Vagina (tissue), 2 donors: ENCODE measurements at regions of chr15 and their contacts with region 1.

Region 1: DNA sequence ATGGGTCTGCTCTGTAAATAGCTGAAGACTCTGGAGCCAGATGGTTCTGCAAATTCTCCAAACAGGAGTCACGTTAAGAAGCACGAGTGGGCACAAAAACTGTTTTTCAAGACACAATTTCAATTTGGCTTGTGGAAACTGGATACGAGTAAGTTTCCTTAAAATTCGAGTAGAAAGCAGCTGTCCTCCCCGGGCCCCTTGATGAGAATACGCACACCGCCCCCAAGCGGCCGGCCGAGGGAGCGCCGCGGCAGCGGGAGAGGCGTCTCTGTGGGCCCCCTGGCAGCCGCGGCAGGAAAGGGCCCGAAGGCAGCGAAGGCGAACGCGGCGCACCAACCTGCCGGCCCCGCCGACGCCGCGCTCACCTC is 778 bp upstream of the THBS1 start:
- DNase-seq: no peak
- H3K4me3 ChIP-seq: peak overlapping the region; percentile 53 to 80
- H3K27ac ChIP-seq: peak overlapping the region; percentile 87
- H3K4me1 ChIP-seq: peaks cover 58% of the 10 kb centered on the region
- H3K27me3 ChIP-seq: no peaks in the 10 kb centered on the region
- CTCF ChIP-seq: peak; percentile 83 to 99 (median 90)
- POLR2A ChIP-seq: no peak

Region 2: GRCh38 chr15:38817427-38818156 is 762.5 kb before region 1 on chr15:
- intact Hi-C with region 1: loop called (anchors 10 kb)
- DNase-seq: no peak
- H3K4me3 ChIP-seq: no peak overlapping the region
- H3K27ac ChIP-seq: no peak overlapping the region
- H3K4me1 ChIP-seq: no peaks in the 10 kb centered on the region
- H3K27me3 ChIP-seq: no peaks in the 10 kb centered on the region
- CTCF ChIP-seq: peak; percentile 93 to 99 (median 97)
- POLR2A ChIP-seq: no peak

Region 3: GRCh38 chr15:39171944-39172368 is 408.1 kb before region 1 on chr15:
- intact Hi-C with region 1: loop called (anchors 2 kb)
- DNase-seq: no peak
- H3K4me3 ChIP-seq: no peak overlapping the region
- H3K27ac ChIP-seq: peak overlapping the region; percentile 19
- H3K4me1 ChIP-seq: peaks cover 19% of the 10 kb centered on the region
- H3K27me3 ChIP-seq: no peaks in the 10 kb centered on the region
- CTCF ChIP-seq: peak in 2 of 3 experiments; percentile 30 to 33
- POLR2A ChIP-seq: no peak

Region 4: GRCh38 chr15:39472621-39473297 is 107.3 kb before region 1 on chr15:
- intact Hi-C with region 1: loop called (anchors 2 kb)
- DNase-seq: peak in 1 of 2 donors; percentile 98
- H3K4me3 ChIP-seq: no peak overlapping the region
- H3K27ac ChIP-seq: peak overlapping the region; percentile 74
- H3K4me1 ChIP-seq: peaks cover 8% of the 10 kb centered on the region
- H3K27me3 ChIP-seq: no peaks in the 10 kb centered on the region
- CTCF ChIP-seq: no peak
- POLR2A ChIP-seq: no peak

Region 5: GRCh38 chr15:39495871-39496840 is 83.9 kb before region 1 on chr15:
- intact Hi-C with region 1: loop called (anchors 10 kb)
- DNase-seq: no peak
- H3K4me3 ChIP-seq: no peak overlapping the region
- H3K27ac ChIP-seq: no peak overlapping the region
- H3K4me1 ChIP-seq: peaks cover 5% of the 10 kb centered on the region
- H3K27me3 ChIP-seq: no peaks in the 10 kb centered on the region
- CTCF ChIP-seq: no peak
- POLR2A ChIP-seq: no peak